ENCODE measurements at regions of chr22 and their contacts with region 1.

Region 1: GRCh38 chr22:37486224-37486845 is at the start of gene MFNG:
- DNase-seq: peak; percentile 56 to 79 (median 64)
- ATAC-seq: peak; percentile 45 to 59
- H3K4me3 Mint-ChIP-seq: peak within 1 kb of the TSS; percentile 93 to 98 (median 96)
- H3K27ac Mint-ChIP-seq: peak within 1 kb of the TSS; percentile 95 to 100 (median 98)
- H3K4me1 Mint-ChIP-seq: peaks cover 59 to 91% (median 69%) of the 10 kb centered on the region in 4 donors
- H3K27me3 Mint-ChIP-seq: peaks cover 0 to 2% (median 0%) of the 10 kb centered on the region in 5 donors
- polyA plus RNA-seq, gene MFNG: 290 to 401 (median 329) TPM

Region 2: GRCh38 chr22:37229805-37230672 is 256.3 kb before region 1 on chr22:
- POLR2A ChIA-PET with region 1: interaction called, 35 read pairs
- DNase-seq: peak; percentile 77 to 96 (median 88)
- ATAC-seq: peak; percentile 69 to 84
- H3K4me3 Mint-ChIP-seq: peak overlapping the region; percentile 79 to 95 (median 88)
- H3K27ac Mint-ChIP-seq: peak overlapping the region; percentile 97 to 100 (median 98)
- H3K4me1 Mint-ChIP-seq: peaks cover 62 to 92% (median 90%) of the 10 kb centered on the region in 4 donors
- H3K27me3 Mint-ChIP-seq: no peaks in the 10 kb centered on the region

Region 3: GRCh38 chr22:37309211-37310074 is 176.9 kb before region 1 on chr22:
- POLR2A ChIA-PET with region 1: interaction called, 27 read pairs
- DNase-seq: peak in 8 of 10 donors; percentile 39 to 77 (median 62)
- ATAC-seq: peak; percentile 31 to 51
- H3K4me3 Mint-ChIP-seq: peak overlapping the region; percentile 63 to 91 (median 84)
- H3K27ac Mint-ChIP-seq: peak overlapping the region; percentile 71 to 100 (median 96)
- H3K4me1 Mint-ChIP-seq: peaks cover 43 to 97% (median 89%) of the 10 kb centered on the region in 4 donors
- H3K27me3 Mint-ChIP-seq: no peaks in the 10 kb centered on the region

Region 4: DNA sequence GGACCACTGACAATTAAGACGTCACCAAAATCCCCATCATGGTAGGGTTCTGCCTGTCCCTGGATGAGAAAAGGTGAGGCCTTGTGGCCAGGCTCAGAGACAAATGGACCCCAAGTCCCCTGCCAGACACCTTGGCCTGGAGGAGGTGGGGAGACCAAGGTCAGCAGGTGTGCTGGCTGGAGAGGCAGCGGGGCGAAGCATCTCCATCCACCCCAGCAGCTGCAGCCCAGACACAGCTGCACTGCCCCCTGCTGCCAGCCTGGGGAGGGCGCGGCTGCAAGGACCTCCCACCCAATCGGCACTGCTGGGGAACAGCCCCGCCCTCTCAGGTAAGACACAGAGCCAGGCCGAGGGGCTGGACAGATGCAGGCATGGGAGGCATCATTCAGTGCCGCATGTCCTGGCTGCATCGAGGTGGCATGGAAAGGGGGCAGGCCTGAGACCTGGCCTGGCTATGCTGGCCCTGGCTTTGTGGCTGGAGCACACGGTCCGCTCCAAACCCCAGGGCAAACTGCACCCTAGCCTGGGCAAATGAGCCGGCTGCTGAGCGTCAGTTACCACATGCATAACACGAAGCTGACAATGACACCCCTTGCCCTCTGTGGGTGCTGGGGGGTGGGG is 12.1 kb after region 1 on chr22:
- POLR2A ChIA-PET with region 1: interaction called, 16 read pairs
- DNase-seq: peak; percentile 61 to 86 (median 72)
- ATAC-seq: peak; percentile 99
- H3K4me3 Mint-ChIP-seq: no peak overlapping the region
- H3K27ac Mint-ChIP-seq: peak overlapping the region in 1 of 10 donors; percentile 8
- H3K4me1 Mint-ChIP-seq: peaks cover 24 to 36% (median 32%) of the 10 kb centered on the region in 4 donors
- H3K27me3 Mint-ChIP-seq: no peaks in the 10 kb centered on the region

Region 5: DNA sequence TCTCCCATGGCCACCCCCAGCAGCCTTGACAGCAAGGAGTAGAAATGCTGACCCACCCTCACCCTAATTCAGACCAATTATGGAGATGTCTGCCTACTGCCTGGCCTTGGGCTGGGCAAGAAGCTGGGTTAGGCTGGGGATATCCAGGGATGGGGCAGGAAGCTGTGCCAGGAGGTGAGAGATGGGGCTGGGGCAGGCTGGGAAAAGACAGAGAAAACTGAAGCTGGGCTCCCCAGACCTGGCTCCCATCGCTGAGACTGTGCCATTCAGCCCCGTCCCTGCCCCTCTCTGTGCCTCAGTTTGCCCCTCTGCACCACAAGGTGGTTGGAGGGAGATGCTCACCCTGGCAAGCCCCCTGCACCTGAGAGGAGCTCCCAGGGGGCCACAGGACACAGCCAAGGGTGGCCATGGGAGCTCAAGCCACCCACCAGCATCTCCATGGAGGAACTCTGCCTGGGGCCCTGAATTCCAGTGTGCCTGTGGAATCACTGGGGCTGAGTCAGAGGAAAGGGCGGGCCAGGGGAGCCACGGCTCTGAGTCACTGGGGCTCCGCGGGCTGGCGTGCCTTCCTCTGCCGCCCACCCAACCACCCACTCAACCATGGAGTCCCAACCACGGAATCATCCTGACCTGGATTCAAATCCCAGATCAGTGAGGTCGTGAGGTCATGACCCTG is 38.9 kb after region 1 on chr22:
- POLR2A ChIA-PET with region 1: no interaction called
- DNase-seq: no peak
- ATAC-seq: no peak
- H3K4me3 Mint-ChIP-seq: no peak overlapping the region
- H3K27ac Mint-ChIP-seq: no peak overlapping the region
- H3K4me1 Mint-ChIP-seq: peaks cover 6 to 10% (median 8%) of the 10 kb centered on the region in 4 donors
- H3K27me3 Mint-ChIP-seq: peaks cover 14 to 32% (median 21%) of the 10 kb centered on the region in 5 donors

Region 6: DNA sequence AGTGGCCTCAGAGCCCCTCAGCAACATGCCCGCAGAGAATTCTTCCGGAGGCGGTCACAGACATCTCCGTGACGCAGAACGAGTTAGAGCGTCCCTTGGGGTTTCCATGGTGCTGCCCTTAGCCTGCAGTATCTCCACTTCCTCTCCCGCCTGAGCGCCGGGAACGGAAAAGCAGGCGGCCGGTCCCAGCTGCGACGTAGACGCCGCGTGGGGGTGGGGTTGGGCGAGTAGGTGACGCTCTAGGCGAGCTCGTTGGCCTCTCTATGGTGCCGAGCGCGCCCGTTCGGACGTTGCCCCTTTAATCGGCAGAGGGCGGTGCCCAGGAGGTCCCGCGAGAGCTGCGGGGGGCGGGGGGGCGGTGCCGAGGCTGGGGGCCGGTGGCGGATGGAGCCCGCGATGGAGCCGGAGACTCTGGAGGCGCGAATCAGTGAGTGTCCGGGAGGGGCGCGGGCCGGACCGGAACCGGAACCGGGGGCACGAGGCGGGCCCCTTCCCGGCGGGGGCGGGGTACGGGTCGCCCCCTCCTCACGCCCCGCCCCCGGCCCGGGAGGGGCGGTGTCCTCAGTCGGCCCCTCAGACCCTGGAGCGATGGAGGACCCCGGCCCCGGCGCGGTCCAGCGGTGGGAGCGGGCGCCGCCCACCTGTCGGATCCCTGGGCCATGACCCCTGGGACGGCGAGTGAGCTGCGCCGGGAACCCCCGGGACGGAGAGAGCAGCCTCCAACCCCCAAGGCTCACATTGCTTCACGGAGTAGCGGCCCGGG is 122.3 kb after region 1 on chr22 and contains the start of gene GGA1:
- POLR2A ChIA-PET with region 1: interaction called, 82 read pairs
- DNase-seq: peak; percentile 92 to 99 (median 97)
- ATAC-seq: peak; percentile 74 to 78
- H3K4me3 Mint-ChIP-seq: peak within 1 kb of the TSS; percentile 88 to 96 (median 93)
- H3K27ac Mint-ChIP-seq: peak within 1 kb of the TSS; percentile 95 to 99 (median 98)
- H3K4me1 Mint-ChIP-seq: peaks cover 30 to 68% (median 62%) of the 10 kb centered on the region in 4 donors
- H3K27me3 Mint-ChIP-seq: no peaks in the 10 kb centered on the region
- polyA plus RNA-seq, gene GGA1: 20.3 to 24.5 (median 22.6) TPM